Activated CD4-positive, alpha-beta T cell treated with anti-CD3 and anti-CD28 coated beads, Interleukin-2, amount 10 ng/mL, durations not matched to agents 24 days and 14 days (primary cell): ENCODE measurements at regions of chr17 and their contacts with region 1.

Region 1: GRCh38 chr17:70636517-70637133 is 467.3 kb downstream of the KCNJ2 start:
- DNase-seq: peak; percentile 58
- H3K4me3 Mint-ChIP-seq: no peak overlapping the region
- H3K27ac Mint-ChIP-seq: no peak overlapping the region
- H3K4me1 Mint-ChIP-seq: no peaks in the 10 kb centered on the region
- H3K27me3 Mint-ChIP-seq: no peaks in the 10 kb centered on the region

Region 2: DNA sequence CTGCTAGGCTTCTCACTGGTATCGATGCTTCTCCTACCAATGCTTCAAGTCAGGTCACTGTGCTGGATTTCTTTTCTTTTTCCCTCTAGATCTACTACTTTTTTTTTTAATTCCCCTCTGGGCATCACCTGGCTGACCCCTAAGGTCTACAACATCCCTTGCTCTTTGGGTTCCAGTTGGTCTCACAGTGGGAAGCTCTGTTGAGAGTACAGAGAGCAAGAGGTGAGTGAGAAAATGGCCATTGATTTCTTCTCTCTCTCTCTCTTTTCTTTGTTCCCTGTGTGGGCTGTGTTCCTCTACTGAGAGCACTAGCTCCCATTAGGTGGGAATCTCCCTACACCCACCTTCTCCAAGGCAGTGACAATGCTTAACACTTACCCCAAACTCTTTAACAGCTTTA is 53.8 kb before region 1 on chr17:
- intact Hi-C with region 1: no loop called
- DNase-seq: no peak
- H3K4me3 Mint-ChIP-seq: no peak overlapping the region
- H3K27ac Mint-ChIP-seq: no peak overlapping the region
- H3K4me1 Mint-ChIP-seq: no peaks in the 10 kb centered on the region
- H3K27me3 Mint-ChIP-seq: no peaks in the 10 kb centered on the region

Region 3: DNA sequence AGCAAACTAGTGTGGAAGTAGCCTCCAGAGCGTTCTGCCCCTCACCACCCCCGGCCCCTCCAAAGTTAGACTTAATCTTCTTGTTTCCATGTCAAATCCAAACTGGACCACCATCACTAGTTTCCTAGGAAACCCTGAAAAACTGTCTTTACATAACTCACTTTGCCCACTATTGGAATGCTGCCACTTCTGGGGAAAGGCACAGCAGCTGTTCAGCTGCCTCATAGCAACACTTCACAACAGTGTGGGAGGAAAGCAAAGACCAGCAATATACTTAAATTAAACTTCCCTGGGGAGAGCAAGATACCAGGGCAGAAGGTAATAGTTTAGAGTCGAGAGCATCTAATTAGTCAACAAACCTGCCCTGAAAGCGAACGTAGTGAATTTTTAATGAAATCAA is 15.1 kb before region 1 on chr17:
- intact Hi-C with region 1: no loop called
- DNase-seq: no peak
- H3K4me3 Mint-ChIP-seq: no peak overlapping the region
- H3K27ac Mint-ChIP-seq: no peak overlapping the region
- H3K4me1 Mint-ChIP-seq: no peaks in the 10 kb centered on the region
- H3K27me3 Mint-ChIP-seq: no peaks in the 10 kb centered on the region

Region 4: DNA sequence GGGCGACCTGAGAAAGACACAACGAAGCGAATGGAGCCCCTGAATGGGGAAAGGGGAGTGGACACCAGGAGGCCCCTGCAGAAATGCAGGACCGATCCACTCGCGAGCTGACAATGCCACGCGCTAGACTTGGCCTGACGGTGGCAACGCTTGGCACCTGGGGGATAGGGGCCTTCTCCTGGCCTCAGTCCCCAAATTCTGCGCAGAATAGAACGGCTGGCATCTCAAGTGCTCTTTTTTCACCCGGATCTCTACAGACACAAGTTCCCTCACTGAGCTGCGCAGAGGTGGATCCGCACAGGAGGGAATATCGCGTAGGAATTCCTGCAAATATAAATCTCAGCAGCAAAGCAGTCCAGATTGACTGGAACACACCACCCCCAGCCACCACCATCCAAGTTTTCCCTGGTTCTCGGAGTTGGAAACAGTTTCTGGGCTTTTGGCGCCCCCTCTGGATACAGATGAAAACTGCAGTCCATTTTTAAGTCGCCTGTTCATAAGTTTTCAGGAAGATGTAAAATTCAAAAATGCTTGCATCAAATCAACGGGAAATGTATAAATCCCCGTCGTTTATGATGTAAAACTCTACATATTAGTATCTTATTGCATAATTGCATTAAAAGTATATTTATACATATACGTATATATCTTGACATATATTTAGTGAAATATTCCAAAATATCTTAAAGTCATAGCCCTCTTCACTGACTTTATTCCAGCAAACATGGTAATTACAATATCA is 1481.9 kb after region 1 on chr17:
- intact Hi-C with region 1: loop called (anchors 5 kb)
- DNase-seq: peak; percentile 76
- H3K4me3 Mint-ChIP-seq: no peak overlapping the region
- H3K27ac Mint-ChIP-seq: peak overlapping the region; percentile 58
- H3K4me1 Mint-ChIP-seq: peaks cover 6% of the 10 kb centered on the region
- H3K27me3 Mint-ChIP-seq: peaks cover 70% of the 10 kb centered on the region

Region 5: DNA sequence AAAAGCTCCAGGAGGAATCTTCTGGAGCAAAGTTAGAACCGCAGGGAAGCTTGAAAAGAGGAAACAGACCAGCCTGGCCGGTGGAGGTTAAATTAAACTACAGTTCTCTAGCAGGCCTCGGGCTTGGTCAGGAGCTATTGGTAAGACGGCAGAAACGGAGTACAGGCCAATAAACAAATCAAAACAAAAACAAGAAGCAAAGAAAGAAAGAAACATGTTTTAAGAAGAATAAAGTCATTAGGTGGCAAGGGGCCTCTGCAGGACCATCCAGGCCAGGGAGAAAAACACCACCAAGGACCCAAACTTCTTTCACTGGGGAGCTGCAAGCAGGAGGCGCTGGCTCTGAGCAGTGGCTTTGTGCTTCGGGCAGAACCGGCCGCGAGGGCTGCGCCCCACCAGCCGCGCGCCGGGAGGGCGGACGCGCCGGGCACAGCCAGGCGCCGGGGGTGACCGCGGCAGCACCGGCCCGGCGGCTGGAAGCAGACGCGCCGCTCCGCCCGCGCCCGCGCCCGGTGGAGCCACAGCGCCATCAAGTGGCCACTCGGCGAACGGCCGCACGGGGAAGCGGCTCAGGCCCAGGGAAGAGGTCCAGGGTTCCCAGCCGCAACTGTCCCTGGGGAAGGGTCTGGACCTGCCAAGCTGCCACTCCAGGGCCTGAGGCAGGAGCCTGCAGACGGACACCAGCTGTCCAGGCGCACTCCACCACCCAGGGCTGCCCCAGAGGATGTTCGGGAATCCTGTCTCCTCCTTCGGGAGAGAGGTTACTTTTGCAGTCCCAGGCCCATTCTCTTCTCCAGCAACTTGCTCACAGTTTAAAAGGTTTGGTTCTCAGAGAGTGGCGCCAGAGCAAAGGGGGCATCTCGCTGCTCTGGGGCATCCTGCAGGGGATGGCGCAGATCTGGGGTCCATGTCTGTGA is 1903.6 kb after region 1 on chr17:
- intact Hi-C with region 1: loop called (anchors 5 kb)
- DNase-seq: peak; percentile 91
- H3K4me3 Mint-ChIP-seq: no peak overlapping the region
- H3K27ac Mint-ChIP-seq: no peak overlapping the region
- H3K4me1 Mint-ChIP-seq: no peaks in the 10 kb centered on the region
- H3K27me3 Mint-ChIP-seq: peaks cover 10% of the 10 kb centered on the region